ENCODE measurements at regions of chr15 and their contacts with region 1.

Region 1: DNA sequence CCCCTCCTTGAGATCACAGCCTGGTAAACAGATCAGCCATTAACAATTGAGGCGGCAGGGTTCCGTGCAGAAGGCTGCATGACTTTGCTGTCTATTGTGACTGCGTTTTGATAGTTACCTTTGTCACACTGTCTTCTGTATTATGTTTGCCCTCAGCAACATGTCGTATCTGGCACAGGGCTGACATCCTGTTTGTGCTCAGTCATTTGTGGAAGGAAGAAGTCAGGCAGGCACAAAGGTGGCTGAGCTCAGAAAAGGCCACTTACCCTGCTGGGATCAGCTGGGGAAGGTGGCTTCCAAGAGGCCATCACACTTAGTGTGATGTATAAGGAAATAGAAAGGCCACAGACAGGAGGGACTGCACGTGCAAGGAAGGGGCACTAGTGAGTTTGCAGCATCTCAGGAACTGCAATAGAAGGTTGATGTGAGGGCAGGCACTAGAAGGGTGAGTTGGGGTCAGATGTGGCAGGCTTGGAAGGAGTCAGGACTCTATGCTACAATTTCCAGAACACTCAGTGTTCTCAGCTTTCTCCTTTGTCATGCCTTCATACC is 13.4 kb downstream of the PML start:
- DNase-seq: peak; percentile 84
- H3K4me3 Mint-ChIP-seq: peak overlapping the region; percentile 51
- H3K27ac Mint-ChIP-seq: peak overlapping the region; percentile 96
- H3K4me1 Mint-ChIP-seq: peaks cover 69% of the 10 kb centered on the region
- H3K27me3 Mint-ChIP-seq: no peaks in the 10 kb centered on the region

Region 2: GRCh38 chr15:73717802-73718201 is 290.1 kb before region 1 on chr15:
- CTCF ChIA-PET with region 1: no interaction called
- intact Hi-C with region 1: no loop called
- DNase-seq: no peak
- H3K4me3 Mint-ChIP-seq: no peak overlapping the region
- H3K27ac Mint-ChIP-seq: no peak overlapping the region
- H3K4me1 Mint-ChIP-seq: no peaks in the 10 kb centered on the region
- H3K27me3 Mint-ChIP-seq: no peaks in the 10 kb centered on the region

Region 3: GRCh38 chr15:73982222-73982962 is 25.5 kb before region 1 on chr15:
- CTCF ChIA-PET with region 1: no interaction called
- intact Hi-C with region 1: loop called (anchors 1 kb)
- DNase-seq: peak; percentile 87
- H3K4me3 Mint-ChIP-seq: peak overlapping the region; percentile 62
- H3K27ac Mint-ChIP-seq: peak overlapping the region; percentile 85
- H3K4me1 Mint-ChIP-seq: peaks cover 47% of the 10 kb centered on the region
- H3K27me3 Mint-ChIP-seq: no peaks in the 10 kb centered on the region

Region 4: DNA sequence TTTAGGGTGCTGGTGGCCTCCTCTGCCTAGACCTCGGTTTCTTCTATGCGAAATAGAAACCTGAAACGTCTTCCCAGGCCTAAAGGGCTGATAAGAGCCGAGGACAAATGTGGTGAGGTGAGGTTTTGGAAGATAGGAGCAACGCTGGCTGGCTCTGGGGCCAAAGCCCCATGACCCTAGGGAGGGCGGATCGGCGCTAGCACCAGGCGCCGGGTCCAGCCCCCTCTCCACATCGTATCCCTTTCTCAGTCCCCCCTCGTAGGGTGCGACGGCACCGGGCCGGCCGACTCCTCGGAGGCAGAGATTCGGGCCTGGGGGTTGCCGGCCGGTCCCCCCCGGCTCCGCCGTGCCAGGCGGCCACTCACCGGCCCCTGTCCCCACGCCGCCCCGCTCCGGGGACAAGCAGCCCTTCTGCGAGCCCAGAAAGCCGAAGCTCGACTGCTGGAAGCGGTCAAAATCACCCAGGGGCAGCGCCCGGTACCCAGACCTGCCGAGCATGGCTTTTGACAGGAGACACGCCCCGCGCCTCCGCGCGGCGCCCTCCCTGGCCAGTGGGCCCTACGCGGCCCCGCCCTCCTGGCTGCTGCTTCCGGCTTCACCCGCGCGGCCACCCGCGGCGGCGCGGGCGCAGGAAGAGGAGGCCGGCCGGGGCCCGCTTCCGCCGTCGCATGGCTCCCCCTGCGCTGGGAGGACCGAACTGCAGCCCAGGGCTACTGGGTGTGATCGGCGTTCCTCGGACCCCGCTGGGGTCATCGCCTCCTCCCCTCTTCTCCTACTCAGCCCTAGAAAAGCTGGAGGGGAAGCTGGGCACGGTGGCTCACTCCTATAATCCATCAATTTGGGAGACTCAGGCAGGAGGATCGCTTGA is 15.9 kb before region 1 on chr15 and contains the start of gene STOML1:
- CTCF ChIA-PET with region 1: interaction called, 24 read pairs
- intact Hi-C with region 1: loop called (anchors 1 kb)
- DNase-seq: peak; percentile 95
- H3K4me3 Mint-ChIP-seq: peak within 1 kb of the TSS; percentile 95
- H3K27ac Mint-ChIP-seq: peak within 1 kb of the TSS; percentile 83
- H3K4me1 Mint-ChIP-seq: peaks cover 49% of the 10 kb centered on the region
- H3K27me3 Mint-ChIP-seq: no peaks in the 10 kb centered on the region
- total RNA-seq, gene STOML1: 8.7 to 9.5 TPM

Measured in activated naive CD4-positive, alpha-beta T cell treated with anti-CD3 and anti-CD28 coated beads for 36 hours (primary cell).